ENCODE measurements at regions of chr17 and their contacts with region 1.

Region 1: GRCh38 chr17:17836250-17836817 is 452 bp downstream of the SREBF1 start:
- H3K4me3 ChIP-seq: peak overlapping the region; percentile 63
- H3K27ac ChIP-seq: peak overlapping the region; percentile 99
- H3K4me1 ChIP-seq: peaks cover 34% of the 10 kb centered on the region
- CTCF ChIP-seq: peak; percentile 50

Region 2: GRCh38 chr17:17783116-17783824 is 53.1 kb before region 1 on chr17:
- CTCF ChIA-PET with region 1: no interaction called
- POLR2A ChIA-PET with region 1: interaction called, 16 read pairs
- H3K4me3 ChIP-seq: peak overlapping the region; percentile 38
- H3K27ac ChIP-seq: peak overlapping the region; percentile 97
- H3K4me1 ChIP-seq: peaks cover 39% of the 10 kb centered on the region
- CTCF ChIP-seq: no peak

Region 3: DNA sequence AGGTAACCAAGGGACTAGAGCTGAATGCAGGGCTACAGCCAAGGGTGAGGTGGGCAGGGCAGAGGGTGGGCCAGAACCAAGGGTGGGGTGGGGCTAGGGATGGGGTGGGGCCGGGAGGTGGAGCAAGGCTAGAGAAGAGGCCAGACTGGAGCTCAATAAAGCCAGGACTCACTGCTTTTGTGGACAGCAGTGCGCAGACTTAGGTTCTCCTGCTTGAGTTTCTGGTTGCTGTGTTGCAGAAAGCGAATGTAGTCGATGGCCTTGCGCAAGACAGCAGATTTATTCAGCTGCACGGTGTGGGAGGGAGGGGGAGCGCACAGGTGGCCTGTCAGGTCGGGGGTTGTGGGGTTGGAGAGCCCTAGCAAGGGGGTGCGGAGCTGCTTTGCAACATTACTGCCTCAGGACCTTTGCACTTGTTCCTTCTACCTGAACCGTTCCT is 18.2 kb before region 1 on chr17:
- CTCF ChIA-PET with region 1: interaction called, 17 read pairs
- POLR2A ChIA-PET with region 1: interaction called, 181 read pairs
- H3K4me3 ChIP-seq: no peak overlapping the region
- H3K27ac ChIP-seq: peak overlapping the region; percentile 28; the same call in 1 of the 2 replicates
- H3K4me1 ChIP-seq: peaks cover 19% of the 10 kb centered on the region
- CTCF ChIP-seq: no peak

Region 4: DNA sequence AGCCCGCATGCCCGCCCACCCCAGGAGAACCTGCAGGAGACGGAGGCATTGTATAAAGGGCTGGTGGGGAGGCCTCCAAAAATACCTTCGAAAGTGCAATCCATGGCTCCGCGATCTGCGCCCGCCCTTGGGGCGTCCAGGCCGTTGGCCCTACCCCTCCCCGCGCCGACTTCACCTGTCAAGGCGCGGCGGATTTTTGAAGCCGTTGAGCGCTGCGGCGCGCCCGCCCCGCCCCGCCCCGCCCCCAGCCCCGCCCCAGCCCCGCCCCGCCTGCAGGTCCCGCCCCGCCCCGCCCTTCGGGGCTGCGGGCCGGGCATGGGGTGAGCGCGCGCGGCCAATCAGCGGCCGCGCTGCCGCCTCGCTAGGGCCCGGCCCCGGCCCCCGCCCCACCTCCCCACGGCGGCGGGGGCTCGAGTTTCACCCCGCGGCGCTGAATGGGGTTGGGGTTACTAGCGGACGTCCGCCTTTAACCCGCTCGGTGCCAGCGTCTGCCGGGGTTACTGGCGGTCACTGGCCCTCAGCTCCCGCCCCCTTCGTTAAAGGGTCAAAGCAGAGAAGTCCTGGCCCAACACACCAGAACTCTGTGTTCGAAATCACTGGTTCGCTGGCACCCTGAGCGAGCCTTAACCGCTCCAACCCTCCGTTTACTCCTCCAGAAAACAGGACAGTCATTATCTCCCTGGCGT is 12.8 kb before region 1 on chr17:
- CTCF ChIA-PET with region 1: interaction called, 7 read pairs
- POLR2A ChIA-PET with region 1: interaction called, 181 read pairs
- H3K4me3 ChIP-seq: peak overlapping the region; percentile 12; the same call in 1 of the 2 replicates
- H3K27ac ChIP-seq: peak overlapping the region; percentile 94
- H3K4me1 ChIP-seq: peaks cover 35% of the 10 kb centered on the region
- CTCF ChIP-seq: no peak

Region 5: DNA sequence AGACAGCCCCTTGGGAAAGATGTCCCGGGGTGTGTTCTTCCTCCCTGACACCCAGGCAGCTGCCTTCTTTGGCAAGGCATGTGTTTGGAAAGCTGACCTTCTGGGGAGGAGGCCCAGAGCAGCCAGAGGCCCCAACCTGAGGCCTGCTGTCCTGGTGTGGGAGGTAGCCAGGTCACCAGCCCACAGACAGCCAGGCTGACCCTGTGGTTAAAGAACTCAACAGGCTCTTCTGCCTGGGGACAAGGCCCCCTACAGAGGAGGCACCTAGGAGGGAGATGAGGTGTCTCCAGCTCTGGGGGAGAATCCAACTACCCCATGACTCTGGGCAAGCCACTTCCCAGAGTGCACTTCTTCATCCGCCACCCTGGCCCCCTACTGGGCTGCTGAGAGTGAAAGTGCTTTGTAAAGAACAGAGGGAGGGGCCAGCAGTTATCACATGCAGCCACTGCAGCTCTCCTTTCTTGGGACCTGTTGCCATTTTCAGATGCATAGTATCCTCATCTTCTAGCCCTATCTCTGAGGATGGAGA is 13.6 kb after region 1 on chr17:
- CTCF ChIA-PET with region 1: interaction called, 5 read pairs
- POLR2A ChIA-PET with region 1: interaction called, 31 read pairs
- H3K4me3 ChIP-seq: no peak overlapping the region
- H3K27ac ChIP-seq: peak overlapping the region; percentile 70
- H3K4me1 ChIP-seq: peaks cover 25% of the 10 kb centered on the region
- CTCF ChIP-seq: no peak; the same call in 1 of the 2 replicates